Activated CD4-positive, alpha-beta T cell treated with anti-CD3 and anti-CD28 coated beads, Interleukin-2, amount 10 ng/mL, durations not matched to agents 24 days and 14 days (primary cell): ENCODE measurements at regions of chr11 and their contacts with region 1.

Region 1: GRCh38 chr11:61733120-61733978 is 19.1 kb upstream of the MYRF start:
- DNase-seq: peak; percentile 95
- H3K4me3 Mint-ChIP-seq: no peak overlapping the region
- H3K27ac Mint-ChIP-seq: no peak overlapping the region
- H3K4me1 Mint-ChIP-seq: peaks cover 2% of the 10 kb centered on the region
- H3K27me3 Mint-ChIP-seq: no peaks in the 10 kb centered on the region

Region 2: GRCh38 chr11:61679893-61680621 is 53.3 kb before region 1 on chr11 and contains the start of gene DAGLA:
- intact Hi-C with region 1: loop called (anchors 1 kb)
- DNase-seq: peak; percentile 94
- H3K4me3 Mint-ChIP-seq: peak within 1 kb of the TSS; percentile 75
- H3K27ac Mint-ChIP-seq: peak within 1 kb of the TSS; percentile 9
- H3K4me1 Mint-ChIP-seq: peaks cover 5% of the 10 kb centered on the region
- H3K27me3 Mint-ChIP-seq: peaks cover 31% of the 10 kb centered on the region
- total RNA-seq, gene DAGLA: 0.09 and 0.14 TPM in 2 replicates

Region 3: GRCh38 chr11:61718621-61719302 is 14.6 kb before region 1 on chr11:
- intact Hi-C with region 1: no loop called
- DNase-seq: no peak
- H3K4me3 Mint-ChIP-seq: no peak overlapping the region
- H3K27ac Mint-ChIP-seq: no peak overlapping the region
- H3K4me1 Mint-ChIP-seq: no peaks in the 10 kb centered on the region
- H3K27me3 Mint-ChIP-seq: peaks cover 3% of the 10 kb centered on the region

Region 4: DNA sequence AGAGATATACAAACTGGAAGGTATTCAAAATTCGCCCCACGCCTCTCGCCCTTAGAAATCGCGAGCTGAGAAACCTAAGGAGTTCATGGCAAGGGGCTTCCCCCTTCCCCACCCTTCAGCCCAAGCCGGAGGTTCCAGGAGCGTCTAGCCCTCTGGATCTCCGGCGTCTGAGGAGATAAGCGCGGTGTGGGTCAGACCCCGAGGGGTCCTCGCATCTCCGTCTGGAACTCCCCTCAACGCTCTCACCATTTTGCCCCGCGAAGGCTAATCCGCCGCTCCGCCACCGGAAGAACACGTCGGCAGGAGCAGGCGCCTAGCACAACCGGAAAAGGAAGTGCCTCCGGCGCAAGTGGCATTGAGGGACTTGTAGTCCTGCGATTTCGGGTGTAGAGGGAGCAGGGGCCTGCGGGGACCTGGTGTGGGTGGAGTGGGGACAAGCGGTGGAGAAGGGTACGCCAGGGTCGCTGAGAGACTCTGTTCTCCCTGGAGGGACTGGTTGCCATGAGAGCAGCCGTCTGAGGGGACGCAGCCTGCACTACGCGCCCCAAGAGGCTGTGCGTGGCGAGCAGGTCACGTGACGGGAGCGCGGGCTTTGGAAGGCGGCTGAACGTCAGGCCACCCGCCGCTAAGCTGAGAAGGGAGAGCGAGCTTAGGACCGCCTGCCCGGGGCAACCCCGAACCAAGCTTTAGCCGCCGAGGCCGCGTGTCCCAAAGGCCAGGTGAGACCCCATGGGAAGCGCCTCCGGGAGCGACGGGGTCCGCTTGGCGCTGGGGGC is 59.1 kb after region 1 on chr11 and contains the starts of genes FEN1 and TMEM258:
- intact Hi-C with region 1: no loop called
- DNase-seq: peak; percentile 96
- H3K4me3 Mint-ChIP-seq: peak within 1 kb of the TSS; percentile 95
- H3K27ac Mint-ChIP-seq: peak within 1 kb of the TSS; percentile 99
- H3K4me1 Mint-ChIP-seq: peaks cover 43% of the 10 kb centered on the region
- H3K27me3 Mint-ChIP-seq: no peaks in the 10 kb centered on the region
- total RNA-seq, gene FEN1: 144 and 152 TPM in 2 replicates
- total RNA-seq, gene TMEM258: 179 and 187 TPM in 2 replicates